Prostate gland (tissue), 2 donors: ENCODE measurements at regions of chr2 and their contacts with region 1.

Region 1: DNA sequence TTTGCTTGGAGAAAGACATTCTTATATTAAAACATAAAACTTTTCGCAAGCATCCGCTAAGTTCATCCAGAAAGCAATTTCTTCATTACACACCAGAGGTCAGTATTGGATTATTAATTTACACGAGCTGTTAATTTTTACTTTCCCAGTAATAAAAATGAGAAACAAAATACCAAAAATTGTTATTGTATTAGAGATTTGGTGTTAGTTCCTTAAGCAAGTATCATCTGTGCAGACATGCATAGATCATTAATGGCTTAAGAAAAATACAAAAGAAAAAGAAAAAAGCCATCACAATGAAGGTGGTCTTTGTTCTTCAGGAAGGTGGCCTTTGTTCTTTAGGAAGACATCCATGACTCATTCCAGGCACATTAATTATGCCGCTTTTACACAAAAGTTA is 53.6 kb upstream of the HNMT start:
- DNase-seq: no peak
- H3K4me3 ChIP-seq: no peak overlapping the region
- H3K27ac ChIP-seq: no peak overlapping the region
- H3K4me1 ChIP-seq: no peaks in the 10 kb centered on the region
- H3K27me3 ChIP-seq: no peaks in the 10 kb centered on the region
- CTCF ChIP-seq: peak in 3 of 4 experiments; percentile 58 to 72 (median 71)
- POLR2A ChIP-seq: no peak

Region 2: DNA sequence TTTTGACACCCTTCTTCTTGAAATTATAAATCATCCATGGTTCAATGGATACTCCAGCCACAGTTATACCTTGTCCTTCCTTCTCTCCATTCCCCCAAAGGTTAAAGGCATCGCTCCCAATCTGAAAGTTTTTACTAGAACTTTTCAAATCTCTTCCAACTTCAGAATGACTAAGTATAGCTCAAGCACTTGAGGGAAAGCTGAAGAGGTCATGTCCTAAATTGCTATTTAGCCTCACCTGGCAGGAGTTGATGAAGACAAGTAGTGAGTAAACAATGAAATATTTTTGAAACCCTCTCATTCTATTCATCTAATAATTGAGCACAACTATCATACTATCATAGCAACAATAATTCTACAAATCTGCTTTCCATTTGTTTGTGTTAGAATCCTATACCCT is 221.5 kb after region 1 on chr2:
- intact Hi-C with region 1: no loop called
- DNase-seq: no peak
- H3K4me3 ChIP-seq: no peak overlapping the region
- H3K27ac ChIP-seq: no peak overlapping the region
- H3K4me1 ChIP-seq: no peaks in the 10 kb centered on the region
- H3K27me3 ChIP-seq: no peaks in the 10 kb centered on the region
- CTCF ChIP-seq: no peak
- POLR2A ChIP-seq: no peak

Region 3: GRCh38 chr2:138373993-138374408 is 463.4 kb after region 1 on chr2:
- intact Hi-C with region 1: loop called (anchors 10 kb)
- DNase-seq: no peak
- H3K4me3 ChIP-seq: no peak overlapping the region
- H3K27ac ChIP-seq: no peak overlapping the region
- H3K4me1 ChIP-seq: no peaks in the 10 kb centered on the region
- H3K27me3 ChIP-seq: no peaks in the 10 kb centered on the region
- CTCF ChIP-seq: peak in 2 of 4 experiments; percentile 64 to 67
- POLR2A ChIP-seq: no peak

Region 4: GRCh38 chr2:138787053-138787666 is 876.5 kb after region 1 on chr2:
- intact Hi-C with region 1: loop called (anchors 5 kb)
- DNase-seq: no peak
- H3K4me3 ChIP-seq: no peak overlapping the region
- H3K27ac ChIP-seq: no peak overlapping the region
- H3K4me1 ChIP-seq: no peaks in the 10 kb centered on the region
- H3K27me3 ChIP-seq: no peaks in the 10 kb centered on the region
- CTCF ChIP-seq: peak; percentile 33 to 77 (median 66)
- POLR2A ChIP-seq: no peak

Region 5: DNA sequence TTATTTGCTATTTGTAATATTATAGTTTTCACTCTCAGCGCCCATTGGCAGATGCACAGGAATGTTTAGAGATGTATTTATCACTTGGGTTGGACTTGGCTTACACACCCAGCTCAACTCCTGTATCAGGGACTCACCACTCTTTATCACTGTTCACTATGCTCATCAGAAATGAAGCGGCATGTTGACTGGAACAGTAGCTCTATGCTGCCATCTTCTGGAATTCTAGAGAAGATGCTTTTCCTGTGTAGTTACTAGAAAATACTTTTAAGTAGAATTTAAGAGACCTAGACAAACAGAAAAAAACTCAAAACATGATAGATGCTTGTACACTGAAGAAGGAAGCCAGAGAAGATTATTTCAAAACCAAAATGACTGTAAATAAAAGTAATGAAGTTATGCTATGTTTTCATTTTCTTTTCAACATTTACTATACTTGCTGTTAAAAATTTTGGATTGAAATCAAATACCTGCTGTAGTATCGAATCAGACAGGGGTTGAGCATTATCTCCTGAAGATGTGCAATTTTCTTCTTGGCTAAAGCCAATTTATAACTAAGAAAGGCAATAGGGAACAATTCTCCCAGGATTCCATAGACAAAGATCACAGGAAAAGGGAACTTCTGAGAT is 916.9 kb after region 1 on chr2:
- intact Hi-C with region 1: loop called (anchors 5 kb)
- DNase-seq: peak; percentile 10
- H3K4me3 ChIP-seq: no peak overlapping the region
- H3K27ac ChIP-seq: no peak overlapping the region
- H3K4me1 ChIP-seq: no peaks in the 10 kb centered on the region
- H3K27me3 ChIP-seq: no peaks in the 10 kb centered on the region
- CTCF ChIP-seq: peak; percentile 23 to 75 (median 65)
- POLR2A ChIP-seq: no peak